Activated CD4-positive, alpha-beta memory T cell treated with anti-CD3 and anti-CD28 coated beads for 36 hours (primary cell): ENCODE measurements at regions of chr3 and their contacts with region 1.

Region 1: DNA sequence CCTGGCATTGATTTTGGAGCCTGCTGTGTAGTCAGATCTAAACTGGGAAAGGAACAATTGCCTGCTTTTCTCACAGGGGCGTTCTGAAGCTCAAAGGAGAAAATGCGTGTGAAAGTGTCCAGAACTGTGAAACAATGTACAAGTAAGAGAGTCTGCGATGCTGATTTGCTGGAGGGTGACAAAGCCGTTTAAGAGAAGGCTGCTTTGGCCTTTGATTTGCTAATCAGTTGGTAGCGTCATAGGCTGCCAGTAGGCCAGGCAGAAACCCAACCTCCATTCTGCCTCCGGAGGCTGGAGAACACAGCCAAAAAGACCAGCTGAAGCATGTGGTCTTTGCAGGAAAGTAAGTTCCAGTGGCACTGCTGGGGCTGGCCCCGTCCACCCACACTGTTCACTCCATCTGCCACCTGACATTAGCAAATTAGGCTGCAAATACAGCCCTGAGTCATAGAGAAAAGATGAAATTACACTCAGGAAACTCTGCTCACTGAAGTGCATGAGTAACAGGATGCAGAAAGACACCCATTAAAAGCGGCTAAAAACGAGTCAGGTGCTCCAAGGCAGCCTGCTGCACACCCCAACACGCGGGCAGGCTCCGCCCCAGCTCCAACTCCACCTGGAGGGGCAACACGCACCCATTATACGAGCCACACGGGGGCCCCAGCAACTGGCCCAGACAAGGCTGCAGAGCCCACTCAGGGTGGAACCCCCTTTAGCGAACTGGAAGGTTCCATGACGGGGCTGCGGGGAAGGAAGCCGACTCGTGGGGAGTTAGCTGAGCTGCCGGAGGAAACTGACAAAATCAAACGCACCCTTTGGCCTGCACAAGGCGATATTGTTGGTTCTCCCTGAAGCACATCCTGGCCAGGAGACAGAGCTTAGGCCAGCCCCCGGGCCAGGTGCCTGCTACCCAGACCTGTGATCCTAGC is 31.6 kb downstream of the ZDHHC19 start:
- DNase-seq: peak; percentile 94
- H3K4me3 Mint-ChIP-seq: peak overlapping the region; percentile 66
- H3K27ac Mint-ChIP-seq: peak overlapping the region; percentile 97
- H3K4me1 Mint-ChIP-seq: peaks cover 59% of the 10 kb centered on the region
- H3K27me3 Mint-ChIP-seq: no peaks in the 10 kb centered on the region

Region 2: GRCh38 chr3:195909644-195910508 is 269.8 kb before region 1 on chr3:
- CTCF ChIA-PET with region 1: no interaction called
- POLR2A ChIA-PET with region 1: no interaction called
- intact Hi-C with region 1: loop called (anchors 5 kb)
- DNase-seq: peak; percentile 91
- H3K4me3 Mint-ChIP-seq: peak overlapping the region; percentile 66
- H3K27ac Mint-ChIP-seq: peak overlapping the region; percentile 54
- H3K4me1 Mint-ChIP-seq: peaks cover 28% of the 10 kb centered on the region
- H3K27me3 Mint-ChIP-seq: no peaks in the 10 kb centered on the region

Region 3: GRCh38 chr3:196081791-196082618 is 97.6 kb before region 1 on chr3 and contains the start of gene TFRC:
- CTCF ChIA-PET with region 1: interaction called, 10 read pairs
- POLR2A ChIA-PET with region 1: interaction called, 12 read pairs
- intact Hi-C with region 1: loop called (anchors 1 kb)
- DNase-seq: peak; percentile 97
- H3K4me3 Mint-ChIP-seq: peak within 1 kb of the TSS; percentile 99
- H3K27ac Mint-ChIP-seq: peak within 1 kb of the TSS; percentile 92
- H3K4me1 Mint-ChIP-seq: peaks cover 31% of the 10 kb centered on the region
- H3K27me3 Mint-ChIP-seq: no peaks in the 10 kb centered on the region
- total RNA-seq, gene TFRC: 341 to 347 TPM

Region 4: GRCh38 chr3:196093317-196094111 is 86.1 kb before region 1 on chr3:
- CTCF ChIA-PET with region 1: no interaction called
- POLR2A ChIA-PET with region 1: no interaction called
- intact Hi-C with region 1: no loop called
- DNase-seq: no peak
- H3K4me3 Mint-ChIP-seq: no peak overlapping the region
- H3K27ac Mint-ChIP-seq: no peak overlapping the region
- H3K4me1 Mint-ChIP-seq: peaks cover 7% of the 10 kb centered on the region
- H3K27me3 Mint-ChIP-seq: no peaks in the 10 kb centered on the region

Region 5: GRCh38 chr3:196165850-196166249 is 13.8 kb before region 1 on chr3:
- CTCF ChIA-PET with region 1: interaction called, 4 read pairs
- POLR2A ChIA-PET with region 1: no interaction called
- intact Hi-C with region 1: loop called (anchors 1 kb)
- DNase-seq: no peak
- H3K4me3 Mint-ChIP-seq: no peak overlapping the region
- H3K27ac Mint-ChIP-seq: no peak overlapping the region
- H3K4me1 Mint-ChIP-seq: peaks cover 11% of the 10 kb centered on the region
- H3K27me3 Mint-ChIP-seq: no peaks in the 10 kb centered on the region

Region 6: GRCh38 chr3:196219194-196219978 is 39.7 kb after region 1 on chr3:
- CTCF ChIA-PET with region 1: no interaction called
- POLR2A ChIA-PET with region 1: no interaction called
- intact Hi-C with region 1: no loop called
- DNase-seq: peak; percentile 83
- H3K4me3 Mint-ChIP-seq: peak overlapping the region; percentile 64
- H3K27ac Mint-ChIP-seq: peak overlapping the region; percentile 80
- H3K4me1 Mint-ChIP-seq: peaks cover 14% of the 10 kb centered on the region
- H3K27me3 Mint-ChIP-seq: no peaks in the 10 kb centered on the region

Region 7: GRCh38 chr3:196502775-196503195 is 323.1 kb after region 1 on chr3:
- CTCF ChIA-PET with region 1: no interaction called
- POLR2A ChIA-PET with region 1: no interaction called
- intact Hi-C with region 1: loop called (anchors 5 kb)
- DNase-seq: peak; percentile 81
- H3K4me3 Mint-ChIP-seq: peak overlapping the region; percentile 97
- H3K27ac Mint-ChIP-seq: peak overlapping the region; percentile 99
- H3K4me1 Mint-ChIP-seq: peaks cover 36% of the 10 kb centered on the region
- H3K27me3 Mint-ChIP-seq: no peaks in the 10 kb centered on the region